ENCODE measurements at regions of chr6 and their contacts with region 1.

Region 1: DNA sequence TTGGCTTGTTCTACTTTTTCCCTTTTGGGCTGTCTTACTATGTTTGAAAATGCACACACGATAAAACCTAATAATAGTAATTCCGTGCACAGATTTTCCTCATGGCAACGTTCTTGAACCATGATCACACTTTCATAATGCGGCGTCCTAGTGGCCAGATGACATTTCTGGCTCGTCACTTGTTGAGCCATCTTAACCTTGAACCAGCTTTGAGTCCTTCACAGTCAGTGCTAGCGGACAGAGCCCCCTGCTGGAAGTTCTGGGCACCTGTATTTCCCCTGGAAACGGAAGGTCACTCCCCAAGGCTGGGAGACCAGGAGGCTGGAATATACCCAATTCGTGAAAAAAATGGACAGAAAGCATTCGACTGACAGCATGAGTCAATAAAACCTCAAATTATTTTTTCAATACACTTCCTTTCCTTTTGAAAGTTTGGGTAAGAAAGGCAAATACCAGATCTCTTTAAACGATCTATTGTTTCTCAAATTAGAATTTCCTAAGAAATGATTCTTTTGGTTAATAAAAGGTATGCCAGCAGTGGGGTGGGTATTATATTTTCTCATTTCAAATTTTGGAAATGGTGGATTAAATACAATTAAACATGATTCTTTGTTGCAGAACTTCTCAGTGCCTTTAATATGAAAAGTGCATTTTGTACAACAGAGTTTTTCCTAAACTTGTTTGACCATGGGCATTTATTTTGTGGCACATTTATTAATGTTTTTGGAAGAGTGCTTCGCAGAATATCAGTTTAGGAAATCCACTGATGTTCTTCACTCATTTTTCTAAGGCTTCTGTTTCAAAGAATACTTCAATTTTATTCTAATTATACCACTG is 542.3 kb downstream of the QKI start:
- DNase-seq: peak; percentile 18
- H3K4me3 ChIP-seq: no peak overlapping the region
- H3K27ac ChIP-seq: no peak overlapping the region
- H3K4me1 ChIP-seq: peaks cover 0 to 10% (median 0%) of the 10 kb centered on the region in 3 donors
- H3K27me3 ChIP-seq: no peaks in the 10 kb centered on the region
- CTCF ChIP-seq: peak; percentile 22 to 94 (median 90)
- POLR2A ChIP-seq: no peak

Region 2: DNA sequence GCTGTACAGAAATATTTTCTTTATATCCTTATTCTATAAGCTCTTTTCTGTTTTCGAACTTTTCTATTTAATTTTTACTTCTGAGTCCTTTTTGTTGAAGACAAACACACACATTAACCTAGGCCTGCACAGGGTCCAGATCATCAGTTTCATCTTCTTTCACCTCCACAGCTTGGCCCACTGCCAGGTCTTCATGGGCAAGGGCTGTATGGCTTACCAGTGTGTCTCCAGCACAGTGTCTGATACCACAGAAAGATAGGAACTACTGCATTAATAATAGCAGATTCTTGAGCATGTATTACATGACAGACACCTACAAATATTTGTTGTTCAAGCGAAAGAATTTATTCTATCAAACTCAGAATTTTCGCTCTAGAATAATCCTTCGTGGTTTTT is 517.9 kb before region 1 on chr6:
- intact Hi-C with region 1: loop called (anchors 10 kb)
- DNase-seq: no peak
- H3K4me3 ChIP-seq: no peak overlapping the region
- H3K27ac ChIP-seq: no peak overlapping the region
- H3K4me1 ChIP-seq: peaks cover 0 to 94% (median 26%) of the 10 kb centered on the region in 3 donors
- H3K27me3 ChIP-seq: no peaks in the 10 kb centered on the region
- CTCF ChIP-seq: no peak
- POLR2A ChIP-seq: no peak

Region 3: GRCh38 chr6:164303102-164303964 is 346.5 kb after region 1 on chr6:
- intact Hi-C with region 1: no loop called
- DNase-seq: no peak
- H3K4me3 ChIP-seq: no peak overlapping the region
- H3K27ac ChIP-seq: no peak overlapping the region
- H3K4me1 ChIP-seq: no peaks in the 10 kb centered on the region
- H3K27me3 ChIP-seq: no peaks in the 10 kb centered on the region
- CTCF ChIP-seq: no peak
- POLR2A ChIP-seq: no peak